GM12878 (cell line): ENCODE measurements at regions of chr12 and their contacts with region 1.

Region 1: DNA sequence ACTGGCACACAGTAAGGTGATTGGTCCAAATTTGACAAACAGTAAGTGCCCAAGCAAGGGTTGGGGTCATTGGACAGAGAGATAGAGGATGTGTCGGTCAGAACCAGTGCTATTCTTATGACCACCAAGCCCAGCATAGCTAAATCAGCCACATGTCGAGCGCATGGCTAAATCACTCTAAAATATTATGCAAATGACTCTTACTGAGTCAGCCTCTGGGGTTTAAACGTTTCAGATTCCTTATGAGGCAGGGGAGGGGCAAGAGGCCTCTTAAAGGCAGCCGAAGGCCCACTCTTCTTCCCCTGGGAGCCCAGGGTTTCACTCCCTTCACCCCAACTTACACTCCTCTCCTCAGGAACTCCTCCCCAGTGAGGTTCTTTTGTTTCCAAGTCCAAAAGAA is 603 bp upstream of the ENDOU start:
- DNase-seq: no peak
- ATAC-seq: peak; percentile 90
- H3K4me3 ChIP-seq: no peak overlapping the region
- H3K27ac ChIP-seq: no peak overlapping the region
- H3K4me1 ChIP-seq: peaks cover 18% of the 10 kb centered on the region
- H3K27me3 ChIP-seq: no peaks in the 10 kb centered on the region
- CTCF ChIP-seq: no peak
- EP300 ChIP-seq: no peak
- POLR2A ChIP-seq: no peak
- RAD21 ChIP-seq: no peak

Region 2: GRCh38 chr12:46786774-46787173 is 939.1 kb before region 1 on chr12:
- CTCF ChIA-PET with region 1: no interaction called
- POLR2A ChIA-PET with region 1: no interaction called
- RAD21 ChIA-PET with region 1: no interaction called
- SMC1A ChIA-PET with region 1: no interaction called
- in situ Hi-C with region 1: no loop called
- intact Hi-C with region 1: no loop called
- DNase-seq: no peak
- ATAC-seq: no peak
- H3K4me3 ChIP-seq: no peak overlapping the region
- H3K27ac ChIP-seq: no peak overlapping the region
- H3K4me1 ChIP-seq: peaks cover 17% of the 10 kb centered on the region
- H3K27me3 ChIP-seq: no peaks in the 10 kb centered on the region
- CTCF ChIP-seq: no peak
- EP300 ChIP-seq: no peak
- POLR2A ChIP-seq: no peak
- RAD21 ChIP-seq: no peak

Region 3: DNA sequence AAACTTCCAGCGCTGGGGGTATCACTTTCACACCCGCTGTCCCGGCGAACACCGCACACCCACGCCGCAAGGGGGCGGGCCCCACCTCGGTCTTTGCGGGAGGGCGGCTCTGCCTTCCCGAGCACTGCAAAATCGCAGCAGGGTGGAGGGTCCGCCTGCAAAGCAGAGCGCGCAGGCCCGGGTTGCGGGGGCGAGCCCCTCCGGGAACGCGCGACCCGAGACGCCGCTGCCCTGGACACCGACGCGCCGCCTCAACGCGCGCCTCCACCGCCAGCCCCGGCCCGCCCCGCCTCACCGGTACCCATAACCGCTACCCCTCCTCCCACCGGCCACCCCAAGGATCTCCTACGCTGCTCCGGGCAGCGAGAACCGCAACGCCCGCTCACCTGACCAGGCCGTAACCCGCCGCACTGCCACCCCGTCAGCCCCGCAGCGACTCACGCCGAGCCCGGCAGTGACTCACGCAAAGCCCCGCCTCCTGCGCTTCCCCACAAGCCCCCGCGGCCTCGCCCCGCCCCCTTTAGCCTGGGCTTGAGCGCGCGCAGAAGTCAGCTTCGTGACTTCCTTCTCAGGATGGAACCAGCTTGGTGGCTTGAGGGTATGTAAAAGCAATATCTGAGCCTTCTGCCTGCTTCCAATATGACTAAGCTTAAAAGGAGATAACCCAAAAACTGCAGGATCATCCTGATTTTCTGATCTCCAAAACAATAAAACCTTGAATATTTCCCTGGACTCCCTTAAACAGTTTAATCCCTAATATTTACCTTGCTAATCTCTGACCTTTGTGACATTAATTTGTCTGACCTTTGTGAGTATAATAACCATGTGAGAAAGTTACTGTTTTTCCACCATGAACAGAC is 20.1 kb before region 1 on chr12 and contains the start of gene RPAP3:
- CTCF ChIA-PET with region 1: interaction called, 3 read pairs
- POLR2A ChIA-PET with region 1: no interaction called
- RAD21 ChIA-PET with region 1: no interaction called
- SMC1A ChIA-PET with region 1: interaction called, 16 read pairs
- in situ Hi-C with region 1: no loop called
- intact Hi-C with region 1: no loop called
- DNase-seq: peak; percentile 65
- ATAC-seq: peak; percentile 94
- H3K4me3 ChIP-seq: peak within 1 kb of the TSS; percentile 84
- H3K27ac ChIP-seq: peak within 1 kb of the TSS; percentile 85
- H3K4me1 ChIP-seq: peaks cover 32% of the 10 kb centered on the region
- H3K27me3 ChIP-seq: no peaks in the 10 kb centered on the region
- CTCF ChIP-seq: peak; percentile 38 to 60 (median 48); a peak in 4 of 6 replicates
- EP300 ChIP-seq: no peak
- POLR2A ChIP-seq: peak; percentile 98
- RAD21 ChIP-seq: no peak
- polyA plus RNA-seq, gene RPAP3: 14.1 to 24.5 TPM

Region 4: GRCh38 chr12:48013287-48013686 is 287.4 kb after region 1 on chr12:
- CTCF ChIA-PET with region 1: no interaction called
- POLR2A ChIA-PET with region 1: no interaction called
- RAD21 ChIA-PET with region 1: no interaction called
- SMC1A ChIA-PET with region 1: no interaction called
- in situ Hi-C with region 1: no loop called
- intact Hi-C with region 1: no loop called
- DNase-seq: no peak
- ATAC-seq: no peak
- H3K4me3 ChIP-seq: no peak overlapping the region
- H3K27ac ChIP-seq: no peak overlapping the region
- H3K4me1 ChIP-seq: no peaks in the 10 kb centered on the region
- H3K27me3 ChIP-seq: peaks cover 2 to 3% of the 10 kb centered on the region in 2 experiments; a peak in 2 of 4 replicates
- CTCF ChIP-seq: no peak
- EP300 ChIP-seq: no peak
- POLR2A ChIP-seq: no peak
- RAD21 ChIP-seq: no peak